ENCODE measurements at regions of chr10 and their contacts with region 1.

Region 1: DNA sequence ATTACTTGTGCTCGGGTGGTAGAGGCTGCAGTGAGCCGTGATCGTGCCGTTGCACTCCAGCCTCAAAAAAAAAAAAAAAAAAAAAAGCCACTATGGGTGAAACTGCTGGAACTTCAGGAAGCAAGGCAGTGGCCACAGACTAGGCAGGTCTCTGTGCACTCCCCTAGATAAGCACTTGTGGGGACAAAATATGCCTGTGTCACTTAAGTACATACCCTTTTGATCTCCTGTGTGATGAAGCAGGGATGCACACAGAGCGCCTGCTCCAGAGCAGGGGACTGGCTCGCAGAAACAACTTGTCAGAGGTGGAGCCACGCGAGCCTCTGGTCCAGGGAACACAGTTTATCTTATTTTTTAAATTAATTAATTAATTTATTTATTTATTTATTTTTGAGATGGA is 42.9 kb upstream of the PSAP start:
- DNase-seq: no peak
- H3K4me3 ChIP-seq: no peak overlapping the region
- H3K27ac ChIP-seq: no peak overlapping the region
- H3K4me1 ChIP-seq: peaks cover 5% of the 10 kb centered on the region
- H3K27me3 ChIP-seq: no peaks in the 10 kb centered on the region
- CTCF ChIP-seq: no peak
- POLR2A ChIP-seq: no peak

Region 2: DNA sequence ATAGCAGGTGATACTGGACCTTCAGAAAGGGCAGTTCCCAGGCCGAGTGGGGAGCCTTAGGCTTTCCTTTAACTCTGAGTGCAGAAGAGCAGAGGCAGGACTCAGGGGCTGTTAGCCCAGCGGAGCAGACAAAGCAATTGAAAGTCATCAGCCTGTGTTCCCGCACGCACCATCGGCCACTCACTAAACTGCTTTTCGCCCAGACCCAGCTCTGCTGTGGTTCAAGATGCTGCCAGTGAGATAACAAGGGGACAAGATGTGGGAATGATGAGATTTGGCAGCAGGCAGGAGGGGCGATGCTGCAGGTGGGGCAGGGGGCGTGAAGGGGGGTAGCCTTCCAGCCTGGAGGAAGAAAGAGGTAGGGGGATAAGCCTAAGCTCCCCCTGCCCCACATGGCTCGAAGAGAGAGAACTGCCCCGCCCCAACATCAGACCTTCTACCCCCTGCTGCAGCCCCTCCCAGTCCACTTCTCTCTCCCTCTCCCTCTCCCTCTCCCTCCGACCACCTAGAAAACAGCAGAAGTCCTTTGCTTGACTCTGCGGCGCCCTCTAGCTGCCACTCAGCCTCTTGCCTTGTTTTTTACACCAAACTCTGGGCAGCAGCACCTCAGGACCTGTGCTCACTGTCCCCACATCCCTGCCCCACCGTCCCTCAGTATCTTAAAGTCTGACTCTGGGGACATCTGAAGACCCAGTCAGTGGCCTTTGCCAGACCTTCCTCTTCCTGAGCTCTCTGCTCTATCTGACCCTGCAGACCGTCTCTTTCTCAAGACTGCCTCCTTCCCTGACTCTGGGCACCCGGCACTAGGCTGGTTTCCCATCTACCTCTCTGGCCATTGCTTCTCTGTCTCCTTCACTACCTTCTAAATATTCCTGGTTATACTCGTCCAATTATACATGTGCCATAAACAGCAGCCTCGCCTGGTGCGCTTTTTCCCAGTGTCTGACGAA is 284.8 kb before region 1 on chr10:
- CTCF ChIA-PET with region 1: no interaction called
- POLR2A ChIA-PET with region 1: no interaction called
- dilution Hi-C with region 1: no loop called
- intact Hi-C with region 1: no loop called
- DNase-seq: peak; percentile 54
- H3K4me3 ChIP-seq: no peak overlapping the region
- H3K27ac ChIP-seq: no peak overlapping the region
- H3K4me1 ChIP-seq: no peaks in the 10 kb centered on the region
- H3K27me3 ChIP-seq: peaks cover 3 to 4% of the 10 kb centered on the region in 2 experiments
- CTCF ChIP-seq: peak; percentile 74 to 89
- POLR2A ChIP-seq: no peak

Region 3: DNA sequence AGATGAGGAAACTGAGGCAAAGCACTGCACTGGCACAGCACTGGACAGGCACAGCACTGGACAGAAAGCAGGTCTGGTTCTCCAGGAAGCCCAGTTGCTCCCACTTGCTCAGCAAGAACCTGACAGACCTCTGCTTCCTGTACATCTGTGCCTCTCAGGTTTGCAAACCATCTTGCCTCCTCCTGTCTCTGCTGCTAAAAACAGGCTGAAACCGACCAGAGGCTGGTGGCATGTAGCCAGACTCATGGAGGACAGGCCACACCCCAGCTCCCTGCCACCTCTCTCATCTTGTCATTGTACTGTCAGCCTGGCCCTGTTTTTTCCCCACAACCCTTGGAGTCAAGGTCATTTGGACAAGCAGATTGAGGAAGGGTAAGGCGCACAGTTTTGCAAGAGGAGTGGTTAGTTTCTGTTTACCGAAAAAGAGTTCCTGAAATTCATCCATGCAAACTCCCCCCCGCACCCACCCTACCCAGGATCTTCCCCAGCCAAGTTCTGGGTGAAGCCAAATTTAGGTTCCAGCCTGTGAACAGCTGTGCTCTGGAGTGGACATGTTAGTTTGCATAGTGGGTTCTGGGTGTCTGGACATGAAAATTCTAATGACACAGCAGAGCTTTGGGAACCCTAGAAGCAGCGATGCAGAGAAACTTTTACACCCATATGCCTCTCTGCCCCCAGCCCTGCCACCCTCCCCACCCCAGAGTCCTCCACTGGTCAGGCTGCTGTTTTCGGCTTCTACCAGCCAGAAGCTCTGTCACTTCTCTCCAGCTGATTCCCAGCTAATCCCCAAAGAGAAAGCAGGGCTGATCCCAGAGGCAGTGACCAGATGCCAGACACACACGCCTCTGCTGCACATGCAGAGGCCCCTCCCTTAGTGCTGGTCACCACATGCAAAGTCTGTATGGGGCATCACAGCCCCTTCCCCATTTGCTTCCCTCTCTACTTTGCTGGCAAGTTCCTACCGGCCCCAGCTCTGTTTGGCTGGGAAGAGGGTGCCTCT is 165.9 kb before region 1 on chr10:
- CTCF ChIA-PET with region 1: no interaction called
- POLR2A ChIA-PET with region 1: no interaction called
- dilution Hi-C with region 1: no loop called
- intact Hi-C with region 1: loop called (anchors 10 kb)
- DNase-seq: no peak
- H3K4me3 ChIP-seq: no peak overlapping the region
- H3K27ac ChIP-seq: no peak overlapping the region
- H3K4me1 ChIP-seq: peaks cover 3% of the 10 kb centered on the region
- H3K27me3 ChIP-seq: peaks cover 0 to 2% of the 10 kb centered on the region in 2 experiments
- CTCF ChIP-seq: no peak
- POLR2A ChIP-seq: no peak

Region 4: DNA sequence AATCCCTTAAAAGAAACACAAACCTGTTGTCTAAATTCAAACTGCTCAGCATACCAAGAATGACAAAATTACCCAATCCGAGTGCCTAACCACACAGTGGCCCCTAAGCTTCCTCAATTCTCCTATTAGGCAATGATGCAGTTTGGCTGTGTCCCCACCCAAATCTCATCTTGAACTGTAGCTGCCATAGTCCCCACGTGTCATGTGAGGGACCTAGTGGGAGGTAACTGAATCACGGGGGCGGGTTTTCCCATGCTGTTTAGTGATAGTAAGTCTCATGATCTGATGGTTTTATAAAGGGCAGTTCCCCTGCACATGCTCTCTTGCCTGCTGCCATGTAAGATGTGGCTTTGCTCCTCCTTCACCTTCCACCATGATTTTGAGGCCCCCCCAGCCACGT is 64.7 kb before region 1 on chr10:
- CTCF ChIA-PET with region 1: interaction called, 152 read pairs
- POLR2A ChIA-PET with region 1: no interaction called
- dilution Hi-C with region 1: no loop called
- intact Hi-C with region 1: no loop called
- DNase-seq: no peak
- H3K4me3 ChIP-seq: no peak overlapping the region
- H3K27ac ChIP-seq: no peak overlapping the region
- H3K4me1 ChIP-seq: peaks cover 7% of the 10 kb centered on the region
- H3K27me3 ChIP-seq: no peaks in the 10 kb centered on the region
- CTCF ChIP-seq: no peak
- POLR2A ChIP-seq: no peak

Region 5: DNA sequence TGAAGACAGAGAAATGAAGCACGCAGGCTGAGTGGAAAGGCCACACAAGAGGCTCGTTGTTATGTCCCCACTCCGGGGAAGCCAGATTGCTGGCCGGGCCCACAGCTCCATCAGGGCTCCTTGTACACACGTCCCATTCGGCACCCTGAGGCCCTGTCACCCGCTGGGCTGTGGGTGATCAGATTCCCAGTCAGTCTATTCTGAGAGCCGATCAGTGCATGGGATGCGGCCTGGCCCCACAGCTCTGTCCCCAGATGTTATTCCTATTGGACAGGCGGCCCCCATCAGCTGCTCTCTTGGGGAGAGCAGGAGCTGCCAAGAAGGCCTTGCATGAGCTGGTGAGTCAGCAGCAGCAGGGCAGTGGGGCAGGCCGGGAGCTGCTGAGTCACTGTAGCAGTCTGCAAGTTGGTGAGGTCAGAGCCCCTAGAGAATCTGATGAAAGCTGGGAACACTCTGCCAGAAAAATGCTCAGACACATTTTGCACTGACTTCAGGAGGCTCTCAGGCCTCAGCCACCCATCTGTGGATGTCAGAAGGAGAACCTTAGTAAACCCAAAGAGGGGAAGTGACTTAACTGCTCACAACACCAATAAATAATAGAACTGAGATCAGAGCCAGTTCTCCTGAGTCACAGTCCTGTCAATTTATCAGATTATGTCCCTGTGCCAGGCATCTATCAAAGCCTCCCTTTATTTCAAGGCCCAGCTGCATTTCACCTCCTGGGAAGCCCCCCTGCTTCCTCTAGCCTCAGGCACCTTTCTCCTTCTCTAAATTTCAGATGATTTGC is 33.5 kb before region 1 on chr10:
- CTCF ChIA-PET with region 1: interaction called, 41 read pairs
- POLR2A ChIA-PET with region 1: no interaction called
- dilution Hi-C with region 1: no loop called
- intact Hi-C with region 1: no loop called
- DNase-seq: peak; percentile 98
- H3K4me3 ChIP-seq: no peak overlapping the region
- H3K27ac ChIP-seq: peak overlapping the region; percentile 93
- H3K4me1 ChIP-seq: peaks cover 19% of the 10 kb centered on the region
- H3K27me3 ChIP-seq: no peaks in the 10 kb centered on the region
- CTCF ChIP-seq: no peak
- POLR2A ChIP-seq: peak; percentile 52

Region 6: DNA sequence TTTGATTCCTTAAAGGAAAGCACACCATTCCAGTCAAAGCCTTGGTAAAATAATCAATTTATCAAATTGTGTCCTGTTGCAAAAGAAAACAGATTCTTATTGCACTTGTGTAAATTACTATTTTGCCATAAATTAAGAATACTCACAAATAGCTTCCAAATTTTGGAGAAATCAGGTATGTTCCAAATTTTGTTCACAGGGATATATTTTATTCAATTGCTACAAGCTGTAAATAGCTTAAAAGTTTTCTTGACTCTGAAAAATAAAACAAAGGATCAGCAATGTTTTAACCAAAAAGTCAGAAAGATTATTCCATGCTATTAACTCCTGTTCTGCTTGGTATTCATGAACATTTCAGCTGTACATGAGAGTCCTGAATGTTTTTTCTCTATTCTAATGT is 22.9 kb after region 1 on chr10:
- CTCF ChIA-PET with region 1: interaction called, 14 read pairs
- POLR2A ChIA-PET with region 1: no interaction called
- dilution Hi-C with region 1: no loop called
- intact Hi-C with region 1: no loop called
- DNase-seq: no peak
- H3K4me3 ChIP-seq: no peak overlapping the region
- H3K27ac ChIP-seq: no peak overlapping the region
- H3K4me1 ChIP-seq: no peaks in the 10 kb centered on the region
- H3K27me3 ChIP-seq: no peaks in the 10 kb centered on the region
- CTCF ChIP-seq: no peak
- POLR2A ChIP-seq: no peak

Region 7: DNA sequence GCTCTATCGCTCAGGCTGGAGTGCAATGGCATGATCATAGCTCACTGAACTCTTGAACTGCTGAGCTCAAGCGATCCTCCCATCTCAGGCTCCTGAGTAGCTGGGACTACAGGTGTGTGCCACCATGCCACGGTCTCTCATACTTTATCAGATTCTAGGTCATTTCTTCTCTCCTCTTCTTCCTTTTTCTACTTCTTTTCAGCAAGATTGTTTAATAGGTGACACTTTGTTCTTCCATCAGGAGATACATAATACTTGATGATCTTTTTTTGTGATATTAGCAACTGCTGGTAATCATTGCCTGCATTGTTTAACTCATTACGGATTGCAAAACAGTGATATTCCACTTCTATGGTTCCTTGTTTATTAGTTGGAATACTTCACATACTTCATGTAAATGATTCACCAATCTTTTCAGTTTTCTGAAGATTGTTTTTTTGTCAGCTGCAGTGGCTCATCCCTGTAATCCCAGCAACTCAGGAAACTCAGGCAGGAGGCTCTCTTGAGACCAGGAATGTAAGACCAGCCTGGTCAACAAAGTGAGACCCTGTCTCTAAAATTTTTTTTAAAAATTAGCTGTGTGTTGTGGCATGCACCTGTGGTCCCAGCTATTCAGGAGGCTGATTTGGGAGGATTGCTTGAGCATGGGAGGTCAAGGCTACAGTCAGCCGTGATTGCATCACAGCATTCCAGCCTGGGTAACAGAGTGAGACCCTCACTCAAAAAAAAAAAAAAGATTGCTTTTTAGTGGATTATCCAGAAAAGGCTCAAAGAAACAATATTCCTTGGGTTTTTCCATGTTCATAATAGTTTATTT is 34.1 kb after region 1 on chr10:
- CTCF ChIA-PET with region 1: no interaction called
- POLR2A ChIA-PET with region 1: no interaction called
- dilution Hi-C with region 1: no loop called
- intact Hi-C with region 1: no loop called
- DNase-seq: no peak
- H3K4me3 ChIP-seq: no peak overlapping the region
- H3K27ac ChIP-seq: no peak overlapping the region
- H3K4me1 ChIP-seq: no peaks in the 10 kb centered on the region
- H3K27me3 ChIP-seq: peaks cover 0 to 2% of the 10 kb centered on the region in 2 experiments
- CTCF ChIP-seq: no peak
- POLR2A ChIP-seq: no peak

Region 8: GRCh38 chr10:72038458-72039001 is 144.6 kb after region 1 on chr10:
- CTCF ChIA-PET with region 1: interaction called, 42 read pairs
- POLR2A ChIA-PET with region 1: no interaction called
- dilution Hi-C with region 1: no loop called
- intact Hi-C with region 1: no loop called
- DNase-seq: no peak
- H3K4me3 ChIP-seq: no peak overlapping the region
- H3K27ac ChIP-seq: no peak overlapping the region
- H3K4me1 ChIP-seq: no peaks in the 10 kb centered on the region
- H3K27me3 ChIP-seq: no peaks in the 10 kb centered on the region
- CTCF ChIP-seq: no peak
- POLR2A ChIP-seq: no peak

Region 9: GRCh38 chr10:72223743-72224101 is 329.8 kb after region 1 on chr10:
- CTCF ChIA-PET with region 1: interaction called, 15 read pairs
- POLR2A ChIA-PET with region 1: no interaction called
- dilution Hi-C with region 1: no loop called
- intact Hi-C with region 1: no loop called
- DNase-seq: peak; percentile 59
- H3K4me3 ChIP-seq: no peak overlapping the region
- H3K27ac ChIP-seq: peak overlapping the region; percentile 67
- H3K4me1 ChIP-seq: peaks cover 11% of the 10 kb centered on the region
- H3K27me3 ChIP-seq: no peaks in the 10 kb centered on the region
- CTCF ChIP-seq: no peak
- POLR2A ChIP-seq: no peak